ENCODE measurements at regions of chr11 and their contacts with region 1.

Region 1: GRCh38 chr11:24609192-24610119 is 112.6 kb downstream of the LUZP2 start:
- DNase-seq: no peak
- H3K4me3 ChIP-seq: no peak overlapping the region
- H3K27ac ChIP-seq: no peak overlapping the region
- H3K4me1 ChIP-seq: no peaks in the 10 kb centered on the region
- H3K27me3 ChIP-seq: no peaks in the 10 kb centered on the region
- CTCF ChIP-seq: no peak

Region 2: DNA sequence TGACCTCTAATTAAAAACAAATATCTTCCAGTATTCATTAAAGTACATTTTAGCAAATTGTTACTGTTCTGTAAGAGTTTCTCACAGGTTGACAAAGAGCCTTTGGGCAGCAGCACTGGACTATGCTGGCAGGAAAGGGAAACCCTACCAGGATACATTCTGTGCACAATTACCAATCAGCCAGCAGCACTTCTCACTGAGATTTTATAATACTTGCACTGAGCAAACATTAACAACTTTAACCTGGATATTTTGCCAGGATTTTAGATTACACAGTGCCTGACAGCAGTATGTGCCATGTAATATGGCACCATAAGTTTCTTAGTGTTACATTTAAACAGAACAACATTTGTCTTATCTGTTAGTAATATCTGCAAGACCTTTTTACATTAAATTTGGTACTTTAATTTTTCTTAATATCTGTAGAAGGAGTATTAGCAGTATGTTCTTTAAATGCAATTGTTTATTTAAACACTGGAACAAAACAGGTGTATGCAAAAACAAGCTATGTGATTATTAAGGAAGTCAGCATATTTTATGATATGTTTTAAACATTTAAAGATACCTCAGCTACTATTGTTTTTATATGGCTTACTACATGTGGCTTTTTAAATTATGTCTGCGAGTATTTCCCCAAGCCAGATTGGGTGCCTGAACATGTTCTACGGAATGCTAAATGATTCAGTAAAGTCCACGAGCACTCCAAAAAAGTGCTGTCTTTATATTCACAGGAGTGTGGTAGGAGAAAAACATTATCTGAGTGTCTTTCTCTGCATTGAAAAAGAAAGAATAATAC is 811.6 kb before region 1 on chr11:
- CTCF ChIA-PET with region 1: no interaction called
- POLR2A ChIA-PET with region 1: no interaction called
- intact Hi-C with region 1: loop called (anchors 5 kb)
- DNase-seq: no peak
- H3K4me3 ChIP-seq: no peak overlapping the region
- H3K27ac ChIP-seq: no peak overlapping the region
- H3K4me1 ChIP-seq: no peaks in the 10 kb centered on the region
- H3K27me3 ChIP-seq: no peaks in the 10 kb centered on the region
- CTCF ChIP-seq: no peak

Region 3: GRCh38 chr11:24422376-24422775 is 187.1 kb before region 1 on chr11:
- CTCF ChIA-PET with region 1: no interaction called
- POLR2A ChIA-PET with region 1: no interaction called
- intact Hi-C with region 1: no loop called
- DNase-seq: no peak
- H3K4me3 ChIP-seq: no peak overlapping the region
- H3K27ac ChIP-seq: no peak overlapping the region
- H3K4me1 ChIP-seq: no peaks in the 10 kb centered on the region
- H3K27me3 ChIP-seq: no peaks in the 10 kb centered on the region
- CTCF ChIP-seq: no peak